AG04449 (cell line): ENCODE measurements at regions of chr5 and their contacts with region 1.

Region 1: DNA sequence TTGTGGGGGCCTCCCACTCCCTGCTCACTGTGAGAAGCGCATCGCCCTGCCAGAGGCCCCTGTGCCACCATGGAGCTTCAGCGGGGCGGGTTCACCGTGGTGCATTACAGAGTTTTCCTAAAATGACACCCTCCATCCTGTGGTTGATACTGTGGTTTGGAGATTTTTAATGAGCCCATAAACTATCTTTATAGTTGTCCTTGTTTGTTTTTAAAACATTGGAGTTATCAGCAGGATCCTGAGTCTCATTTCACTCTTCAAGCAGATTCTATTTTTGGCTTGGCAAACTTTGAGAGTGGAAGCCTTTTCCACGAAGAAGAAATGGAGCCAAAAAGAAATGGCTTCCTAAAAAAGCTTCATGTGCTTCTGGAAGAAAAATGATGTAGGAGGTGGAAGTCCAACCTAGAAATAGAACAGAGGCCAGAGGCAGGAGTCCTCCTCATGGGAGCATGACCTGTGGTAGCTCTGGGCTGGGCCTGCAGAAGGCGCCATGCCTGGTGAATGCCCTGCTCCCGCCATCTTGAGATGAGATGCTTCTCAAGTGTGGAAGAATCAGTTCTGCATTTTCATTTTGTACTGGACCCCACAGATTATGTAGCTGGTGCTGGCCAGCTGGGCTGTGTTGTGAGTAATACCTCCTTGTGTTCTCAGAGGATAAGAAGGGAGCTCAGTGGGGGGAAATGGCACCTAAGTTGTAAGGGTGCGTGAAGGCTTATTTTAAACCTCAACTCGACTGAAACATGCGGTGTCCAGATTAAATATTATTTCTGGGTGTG is 79.0 kb upstream of the RAI14 start:
- DNase-seq: peak; percentile 36
- H3K4me3 ChIP-seq: no peak overlapping the region
- CTCF ChIP-seq: no peak

Region 2: GRCh38 chr5:34411470-34412384 is 165.4 kb before region 1 on chr5:
- CTCF ChIA-PET with region 1: no interaction called
- POLR2A ChIA-PET with region 1: no interaction called
- DNase-seq: peak; percentile 24
- H3K4me3 ChIP-seq: no peak overlapping the region
- CTCF ChIP-seq: no peak

Region 3: GRCh38 chr5:34587355-34588241 is 10.5 kb after region 1 on chr5:
- CTCF ChIA-PET with region 1: interaction called, 13 read pairs
- POLR2A ChIA-PET with region 1: interaction called, 6 read pairs
- DNase-seq: peak; percentile 47
- H3K4me3 ChIP-seq: no peak overlapping the region; the same call in 1 of the 2 replicates
- CTCF ChIP-seq: no peak